KBM-7 (cell line): ENCODE measurements at regions of chr1 and their contacts with region 1.

Region 1: DNA sequence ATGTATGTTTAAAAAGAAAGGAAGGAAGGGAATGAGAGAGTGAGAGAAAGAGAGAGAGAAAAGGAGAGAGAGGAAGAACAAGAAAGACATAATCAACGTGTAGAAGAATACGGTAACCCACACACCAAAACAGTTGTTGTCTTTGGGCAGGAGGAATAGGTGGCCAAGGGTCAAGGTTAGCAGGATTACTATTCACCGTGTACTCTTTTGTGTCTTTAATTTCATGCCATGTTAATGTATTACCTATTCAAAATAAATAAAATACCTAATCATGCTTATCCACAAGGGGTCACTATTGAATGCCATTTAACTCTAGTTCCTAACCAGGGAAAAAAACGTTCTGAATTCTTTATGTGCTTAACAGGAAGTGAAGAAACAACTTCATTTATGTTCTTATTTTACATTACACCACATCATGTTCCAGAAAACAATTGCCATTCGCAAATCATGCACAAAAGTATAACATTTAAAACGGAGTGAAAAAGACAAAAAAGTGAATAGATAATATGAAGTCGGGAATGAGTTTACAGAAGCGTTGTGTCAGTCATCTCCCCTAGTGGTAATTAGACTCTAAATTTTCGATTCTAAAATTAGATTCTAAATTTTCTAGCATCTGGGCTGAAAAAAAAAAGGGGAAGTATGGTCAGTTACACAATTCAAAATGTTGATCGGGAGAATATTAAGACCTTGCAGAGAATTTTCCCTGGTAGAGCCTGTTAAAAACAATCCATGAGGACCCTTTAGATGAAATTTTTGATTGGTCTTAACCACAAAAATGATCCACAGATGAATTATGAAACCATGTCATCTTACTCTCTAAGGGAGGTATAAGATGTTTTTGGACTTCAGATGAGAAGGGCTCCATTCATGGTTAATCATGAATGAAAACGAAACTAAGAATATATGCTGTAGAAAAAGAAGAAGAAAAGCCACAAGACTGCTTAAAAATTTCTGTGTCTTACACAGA is 700 bp upstream of the KMO start:
- DNase-seq: peak; percentile 94

Region 2: DNA sequence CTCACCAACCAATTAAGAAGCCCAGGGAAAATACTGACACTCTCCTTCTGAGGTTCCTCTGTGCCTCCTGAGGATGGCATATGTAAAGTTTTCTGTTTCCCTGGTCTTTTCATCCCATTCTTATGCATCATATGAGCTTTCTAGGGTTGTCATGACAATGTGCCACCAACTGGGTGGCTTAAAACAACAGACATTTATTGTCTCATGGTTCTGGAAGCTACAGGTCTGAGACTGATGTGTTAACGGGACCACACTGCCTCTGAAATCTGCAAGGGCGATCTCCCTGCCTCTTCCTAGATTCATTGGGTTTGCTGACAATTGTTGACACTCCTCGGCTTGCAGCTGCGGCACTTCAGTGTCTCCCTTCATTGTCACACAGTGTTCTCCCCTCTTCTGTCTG is 482.9 kb before region 1 on chr1:
- in situ Hi-C with region 1: no loop called
- DNase-seq: no peak

Region 3: DNA sequence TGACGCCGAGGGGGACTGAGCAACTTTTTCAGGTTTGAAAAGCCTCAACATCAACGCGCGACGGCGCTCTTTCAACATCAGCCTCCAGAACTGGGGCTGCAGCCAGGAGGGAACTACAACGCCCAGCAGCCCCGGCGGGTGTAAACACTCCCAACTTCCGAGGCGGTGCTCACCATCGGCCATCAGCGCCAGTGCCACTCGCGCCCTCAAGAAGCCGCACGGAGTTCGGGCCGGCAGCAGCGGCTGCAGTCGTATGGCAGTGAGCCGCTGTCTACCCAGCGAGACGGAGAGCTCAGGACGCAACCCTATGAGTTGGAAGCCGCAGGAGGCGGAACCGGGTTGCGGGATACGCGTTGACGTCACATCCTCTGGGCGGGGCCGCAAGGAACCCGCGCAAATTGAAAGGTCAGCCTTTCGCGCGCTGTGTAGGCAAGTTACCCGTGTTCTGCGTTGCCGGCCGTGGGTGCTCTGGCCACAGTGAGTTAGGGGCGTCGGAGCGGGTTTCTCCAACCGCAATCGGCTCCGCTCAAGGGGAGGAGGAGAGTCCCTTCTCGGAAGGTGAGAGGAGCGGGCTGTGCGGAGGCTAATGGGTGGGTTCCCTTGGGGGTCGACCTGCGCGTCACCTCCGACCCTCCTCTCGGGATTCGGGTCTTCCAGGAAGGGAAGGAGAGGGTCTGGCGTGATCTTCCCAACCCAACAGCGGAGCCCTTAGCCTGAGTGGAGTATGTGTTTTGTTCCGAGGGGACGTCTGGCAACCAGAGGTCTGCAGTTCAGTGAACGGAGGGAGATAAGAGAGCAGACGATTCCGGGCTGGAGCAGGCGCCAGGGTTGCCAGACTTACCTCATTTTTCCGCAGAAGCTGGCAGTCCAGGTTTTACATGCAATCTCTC is 316.6 kb after region 1 on chr1 and contains the start of gene EXO1:
- in situ Hi-C with region 1: loop called (anchors 25 kb)
- DNase-seq: peak; percentile 96